WTC11 (cell line): ENCODE measurements at regions of chr5 and their contacts with region 1.

Region 1: GRCh38 chr5:170225326-170226128 is 7.3 kb upstream of the C5orf58 start:
- DNase-seq: peak; percentile 81
- ATAC-seq: peak; percentile 60
- H3K4me3 Mint-ChIP-seq: no peak overlapping the region
- H3K27ac Mint-ChIP-seq: no peak overlapping the region
- H3K4me1 Mint-ChIP-seq: peaks cover 60% of the 10 kb centered on the region
- H3K27me3 Mint-ChIP-seq: peaks cover 6% of the 10 kb centered on the region
- CTCF ChIP-seq: peak; percentile 53; the same call in 1 of the 2 replicates

Region 2: DNA sequence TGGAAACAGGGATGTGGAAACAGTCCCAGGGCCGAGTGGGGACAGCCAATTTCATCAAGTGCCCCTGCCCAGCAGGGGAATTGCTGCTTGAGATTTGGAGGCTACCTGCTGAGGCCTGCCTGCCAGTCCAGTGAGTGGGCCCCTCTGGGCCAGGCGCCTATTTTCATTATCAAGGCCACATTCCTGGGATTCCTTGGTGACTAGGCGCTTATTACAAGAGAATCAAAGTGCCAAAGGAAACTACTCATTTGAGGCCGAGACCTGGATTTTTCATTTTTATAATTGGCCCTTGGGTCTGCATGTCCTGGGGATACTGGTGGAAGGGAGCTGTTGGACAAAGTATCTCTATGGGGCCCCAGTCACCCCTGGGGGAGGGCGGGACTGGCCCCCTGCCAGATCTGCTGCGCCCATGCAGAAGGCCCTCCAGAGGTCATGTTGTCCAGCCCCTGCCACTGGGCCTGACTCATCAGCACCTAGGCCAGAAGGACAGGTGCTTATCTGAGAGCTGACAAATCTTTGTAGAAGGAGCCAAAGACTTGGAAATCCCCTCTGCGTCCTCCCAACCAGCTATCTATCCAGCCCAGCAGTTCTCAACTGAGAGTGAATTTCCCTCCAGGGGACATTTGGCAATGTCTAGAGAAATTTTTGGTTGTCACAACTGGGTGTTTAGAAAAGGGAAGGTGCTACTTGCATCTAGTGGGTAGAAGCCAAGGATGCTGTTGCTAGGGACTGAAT is 74.3 kb before region 1 on chr5:
- CTCF ChIA-PET with region 1: no interaction called
- POLR2A ChIA-PET with region 1: no interaction called
- DNase-seq: peak; percentile 45
- ATAC-seq: peak; percentile 71
- H3K4me3 Mint-ChIP-seq: no peak overlapping the region
- H3K27ac Mint-ChIP-seq: no peak overlapping the region
- H3K4me1 Mint-ChIP-seq: peaks cover 28% of the 10 kb centered on the region
- H3K27me3 Mint-ChIP-seq: no peaks in the 10 kb centered on the region
- CTCF ChIP-seq: no peak

Region 3: DNA sequence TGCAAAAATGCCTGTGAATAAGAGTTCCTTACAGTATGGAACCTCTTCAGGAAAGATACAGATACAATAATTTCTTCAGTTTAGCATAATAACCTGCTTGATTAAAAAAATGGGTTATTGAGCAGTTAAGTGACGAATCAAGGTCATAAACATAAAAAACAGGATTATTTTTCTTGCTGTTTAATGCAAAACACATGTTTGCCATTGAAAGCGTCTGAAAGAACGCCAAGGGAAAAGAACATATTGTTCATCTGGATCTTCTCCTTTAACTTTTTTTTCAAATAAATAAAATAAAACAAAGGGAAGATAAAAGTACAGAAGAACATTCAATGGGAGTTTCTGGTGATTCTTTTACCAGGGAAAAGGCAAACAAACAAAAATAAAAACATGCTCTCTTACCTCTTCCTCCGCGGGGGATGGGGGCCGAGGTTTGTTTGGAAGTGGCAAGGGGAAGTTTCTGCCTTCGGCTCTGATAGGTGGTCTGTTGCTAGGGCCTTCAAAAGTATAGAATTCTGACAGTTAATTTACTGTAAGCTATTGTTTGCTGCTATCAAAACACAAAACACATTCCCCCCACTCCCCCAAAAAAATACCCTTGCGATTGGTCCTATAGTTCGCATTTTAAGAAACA is 27.3 kb after region 1 on chr5:
- CTCF ChIA-PET with region 1: interaction called, 11 read pairs
- POLR2A ChIA-PET with region 1: no interaction called
- DNase-seq: no peak
- ATAC-seq: no peak
- H3K4me3 Mint-ChIP-seq: peak overlapping the region; percentile 5
- H3K27ac Mint-ChIP-seq: peak overlapping the region; percentile 35; the same call in 1 of the 2 replicates
- H3K4me1 Mint-ChIP-seq: peaks cover 88% of the 10 kb centered on the region
- H3K27me3 Mint-ChIP-seq: no peaks in the 10 kb centered on the region; the same call in 1 of the 2 replicates
- CTCF ChIP-seq: no peak

Region 4: GRCh38 chr5:170278611-170279452 is 53.3 kb after region 1 on chr5:
- CTCF ChIA-PET with region 1: interaction called, 17 read pairs
- POLR2A ChIA-PET with region 1: no interaction called
- DNase-seq: peak; percentile 26
- ATAC-seq: peak; percentile 8
- H3K4me3 Mint-ChIP-seq: no peak overlapping the region
- H3K27ac Mint-ChIP-seq: 0 out of 2 replicates have a peak overlapping the region, but pooled peaks have one; percentile 9
- H3K4me1 Mint-ChIP-seq: peaks cover 54% of the 10 kb centered on the region
- H3K27me3 Mint-ChIP-seq: peaks cover 27% of the 10 kb centered on the region
- CTCF ChIP-seq: no peak

Region 5: GRCh38 chr5:170338933-170339779 is 113.6 kb after region 1 on chr5:
- CTCF ChIA-PET with region 1: interaction called, 92 read pairs
- POLR2A ChIA-PET with region 1: interaction called, 3 read pairs
- DNase-seq: peak; percentile 64
- ATAC-seq: peak; percentile 84
- H3K4me3 Mint-ChIP-seq: no peak overlapping the region
- H3K27ac Mint-ChIP-seq: no peak overlapping the region
- H3K4me1 Mint-ChIP-seq: peaks cover 58% of the 10 kb centered on the region
- H3K27me3 Mint-ChIP-seq: no peaks in the 10 kb centered on the region; the same call in none of the 2 replicates
- CTCF ChIP-seq: peak; percentile 63

Region 6: DNA sequence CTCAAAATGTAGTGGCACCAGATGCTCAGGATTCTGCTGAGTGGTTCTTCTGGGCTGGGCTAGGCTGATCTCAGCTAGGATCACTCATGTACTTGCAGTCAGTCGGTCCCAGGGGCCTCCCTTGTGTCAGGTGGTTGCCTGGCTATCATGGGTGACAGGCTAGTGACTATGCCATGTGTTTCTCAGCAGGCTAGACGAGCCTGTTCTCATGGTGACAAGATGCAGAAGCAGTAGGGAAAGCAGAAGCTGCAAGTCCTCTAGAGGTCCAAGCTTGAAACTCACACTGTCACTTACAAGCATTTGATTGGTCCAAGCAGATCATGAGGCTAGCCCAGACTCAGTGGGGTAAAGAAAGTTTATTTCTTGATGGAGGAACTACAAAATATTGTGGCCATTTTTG is 178.9 kb after region 1 on chr5:
- CTCF ChIA-PET with region 1: interaction called, 73 read pairs
- POLR2A ChIA-PET with region 1: interaction called, 3 read pairs
- DNase-seq: no peak
- ATAC-seq: no peak
- H3K4me3 Mint-ChIP-seq: no peak overlapping the region
- H3K27ac Mint-ChIP-seq: no peak overlapping the region
- H3K4me1 Mint-ChIP-seq: peaks cover 60% of the 10 kb centered on the region
- H3K27me3 Mint-ChIP-seq: 0 out of 2 replicates have a peak, but pooled peaks cover 3% of the 10 kb centered on the region
- CTCF ChIP-seq: no peak

Region 7: GRCh38 chr5:170429014-170429413 is 203.5 kb after region 1 on chr5:
- CTCF ChIA-PET with region 1: interaction called, 14 read pairs
- POLR2A ChIA-PET with region 1: no interaction called
- DNase-seq: no peak
- ATAC-seq: peak; percentile 84
- H3K4me3 Mint-ChIP-seq: no peak overlapping the region
- H3K27ac Mint-ChIP-seq: no peak overlapping the region
- H3K4me1 Mint-ChIP-seq: peaks cover 18% of the 10 kb centered on the region
- H3K27me3 Mint-ChIP-seq: no peaks in the 10 kb centered on the region; the same call in 1 of the 2 replicates
- CTCF ChIP-seq: no peak